Activated CD8-positive, alpha-beta T cell treated with anti-CD3 and anti-CD28 coated beads, Interleukin-2, amount 10 ng/mL, durations not matched to agents 7 days and 5 days (primary cell): ENCODE measurements at regions of chr5 and their contacts with region 1.

Region 1: DNA sequence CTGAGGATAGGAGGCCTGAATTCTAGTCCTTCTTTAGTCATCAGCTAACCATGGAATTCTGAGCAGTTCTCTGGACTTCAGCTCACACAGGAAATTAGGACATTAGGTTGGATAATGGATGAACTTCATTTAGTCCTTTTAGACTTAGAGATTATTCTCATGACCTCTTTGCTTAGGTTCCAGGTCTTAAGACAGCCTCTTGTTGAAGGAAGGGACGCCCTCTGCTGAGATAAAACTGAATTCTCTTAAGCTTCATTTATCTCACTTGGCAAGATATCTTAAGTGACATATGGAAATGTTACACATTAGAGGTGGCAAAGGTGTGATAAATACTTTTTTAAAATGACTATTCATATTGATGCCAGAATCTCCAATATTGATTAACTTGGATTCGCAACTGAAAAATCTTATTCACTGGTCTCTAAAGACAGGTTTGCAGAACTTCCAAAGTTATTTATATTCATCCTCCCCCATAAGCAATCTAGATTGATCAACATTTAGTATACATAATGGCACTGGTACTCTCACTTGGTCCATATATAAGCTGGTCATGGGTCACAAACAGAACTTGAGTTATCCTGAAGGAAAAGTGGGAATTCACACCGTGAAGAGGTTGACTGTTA is 16.9 kb upstream of the ZNF366 start:
- DNase-seq: no peak
- ATAC-seq: no peak
- H3K4me3 Mint-ChIP-seq: no peak overlapping the region
- H3K27ac Mint-ChIP-seq: no peak overlapping the region
- H3K4me1 Mint-ChIP-seq: no peaks in the 10 kb centered on the region
- H3K27me3 Mint-ChIP-seq: peaks cover 3% of the 10 kb centered on the region

Region 2: DNA sequence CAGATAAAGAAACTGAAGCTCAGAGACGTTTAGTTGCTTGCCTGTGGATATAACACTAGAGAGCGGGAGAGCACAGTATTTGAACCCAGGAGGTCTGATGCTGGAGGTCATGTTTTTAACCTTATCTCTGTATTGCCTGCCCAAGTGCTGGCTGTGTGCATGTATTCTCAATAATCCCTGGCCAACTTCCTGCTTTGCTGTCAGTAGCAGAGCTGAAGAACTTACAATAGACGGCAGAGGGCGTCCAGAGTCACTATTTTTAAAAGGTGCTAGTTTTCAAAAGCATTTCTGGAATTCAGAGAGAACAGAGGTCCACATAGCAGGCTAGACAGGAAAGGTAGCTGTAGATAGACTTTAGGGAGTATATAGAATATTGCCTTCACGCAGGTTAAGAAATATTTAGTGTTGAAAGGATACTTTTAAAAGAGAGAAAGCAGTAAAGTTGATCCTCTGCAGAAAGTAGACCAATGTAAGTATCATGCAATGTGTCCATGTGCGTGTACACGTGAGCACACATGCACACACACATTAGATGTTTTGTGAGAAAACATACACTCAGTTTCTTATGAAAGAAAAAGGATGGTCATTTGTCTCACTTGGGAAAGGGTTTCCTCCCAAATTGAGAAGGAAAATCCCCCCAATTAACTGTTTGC is 157.6 kb before region 1 on chr5:
- CTCF ChIA-PET with region 1: interaction called, 17 read pairs
- POLR2A ChIA-PET with region 1: no interaction called
- DNase-seq: peak; percentile 62
- ATAC-seq: peak; percentile 90
- H3K4me3 Mint-ChIP-seq: no peak overlapping the region
- H3K27ac Mint-ChIP-seq: no peak overlapping the region
- H3K4me1 Mint-ChIP-seq: peaks cover 7% of the 10 kb centered on the region
- H3K27me3 Mint-ChIP-seq: no peaks in the 10 kb centered on the region

Region 3: DNA sequence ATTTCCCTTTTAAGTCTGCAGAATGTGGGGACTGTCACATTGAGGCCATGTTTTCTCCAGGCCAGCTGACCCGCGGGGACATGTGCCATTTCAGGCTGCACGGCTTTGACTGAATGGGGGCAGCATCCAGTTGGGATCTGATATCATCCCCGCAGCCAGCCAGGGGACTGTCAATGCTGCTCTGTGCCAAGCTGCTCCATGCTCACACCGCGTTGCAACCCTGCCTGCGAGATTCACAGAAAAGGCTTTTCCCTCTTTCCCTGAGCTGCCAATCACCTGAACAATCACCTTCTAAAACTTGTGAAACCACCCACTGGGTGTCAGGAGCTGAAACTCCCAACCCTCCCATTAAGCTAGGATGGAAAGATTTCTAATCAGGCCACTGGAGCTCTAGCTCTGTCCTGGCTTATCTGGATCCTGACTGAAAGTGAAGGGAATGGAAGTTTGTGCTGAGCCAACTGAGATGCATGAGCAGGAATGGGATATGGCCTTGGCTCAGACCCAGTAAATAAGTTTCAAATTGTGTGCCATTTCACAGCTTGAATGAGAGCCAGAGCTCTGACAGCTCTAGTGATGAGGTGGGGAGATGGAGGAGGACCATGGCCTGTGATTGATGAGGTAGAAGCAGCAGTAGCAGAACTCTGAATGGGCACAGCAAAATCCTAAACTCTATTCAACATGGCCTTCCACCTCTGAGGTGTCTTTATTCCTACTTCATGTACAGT is 17.6 kb after region 1 on chr5:
- CTCF ChIA-PET with region 1: no interaction called
- POLR2A ChIA-PET with region 1: no interaction called
- DNase-seq: no peak
- ATAC-seq: no peak
- H3K4me3 Mint-ChIP-seq: no peak overlapping the region
- H3K27ac Mint-ChIP-seq: no peak overlapping the region
- H3K4me1 Mint-ChIP-seq: no peaks in the 10 kb centered on the region
- H3K27me3 Mint-ChIP-seq: peaks cover 16% of the 10 kb centered on the region